ENCODE measurements at regions of chr17 and their contacts with region 1.

Region 1: GRCh38 chr17:72342627-72343527 is 222.1 kb downstream of the SOX9 start:
- DNase-seq: no peak
- H3K4me3 ChIP-seq: no peak overlapping the region
- H3K27ac ChIP-seq: no peak overlapping the region
- H3K4me1 ChIP-seq: no peaks in the 10 kb centered on the region
- H3K27me3 ChIP-seq: no peaks in the 10 kb centered on the region
- CTCF ChIP-seq: no peak
- EP300 ChIP-seq: no peak
- POLR2A ChIP-seq: no peak

Region 2: GRCh38 chr17:72392056-72393010 is 49.5 kb after region 1 on chr17:
- intact Hi-C with region 1: loop called in 1 of 4 experiments (anchors 5 kb)
- DNase-seq: no peak
- H3K4me3 ChIP-seq: no peak overlapping the region
- H3K27ac ChIP-seq: no peak overlapping the region
- H3K4me1 ChIP-seq: no peaks in the 10 kb centered on the region
- H3K27me3 ChIP-seq: no peaks in the 10 kb centered on the region
- CTCF ChIP-seq: no peak
- EP300 ChIP-seq: no peak
- POLR2A ChIP-seq: no peak